ENCODE measurements at regions of chr5 and their contacts with region 1.

Region 1: DNA sequence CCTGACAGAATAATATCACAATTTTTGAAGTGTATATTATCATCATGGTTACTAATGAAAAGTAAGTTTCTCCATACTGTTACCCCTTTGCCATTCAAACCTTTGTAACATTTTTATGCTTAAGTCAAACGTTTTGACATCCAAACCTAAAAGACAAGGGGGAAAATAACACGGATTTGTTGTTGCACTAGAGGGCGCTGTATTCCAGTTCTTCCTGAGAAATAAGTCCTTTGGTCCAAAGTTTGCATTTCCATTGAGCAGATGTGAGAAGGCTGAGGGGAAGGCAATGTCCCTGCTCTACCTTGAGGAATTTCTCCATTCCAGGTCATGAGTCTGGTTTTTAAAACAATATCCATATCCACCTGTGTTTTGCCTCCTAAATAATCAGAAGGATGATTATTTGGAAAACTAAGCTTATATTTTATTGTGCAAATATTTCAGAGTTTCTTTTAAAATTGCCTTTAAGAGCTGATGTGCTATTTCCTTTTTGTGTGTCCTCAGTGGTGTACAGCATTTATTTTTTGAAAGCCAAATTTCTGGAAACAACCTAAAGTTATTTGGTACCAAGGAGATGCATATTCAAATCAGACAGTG is 9.7 kb downstream of the LECT2 start:
- DNase-seq: peak in 3 of 6 donors; percentile 25 to 48 (median 32)
- ATAC-seq: peak; percentile 43 to 82 (median 76)
- H3K4me3 ChIP-seq: no peak overlapping the region
- H3K27ac ChIP-seq: no peak overlapping the region
- H3K4me1 ChIP-seq: no peaks in the 10 kb centered on the region
- H3K27me3 ChIP-seq: no peaks in the 10 kb centered on the region
- CTCF ChIP-seq: peak in 3 of 4 donors; percentile 34 to 67 (median 65)

Region 2: DNA sequence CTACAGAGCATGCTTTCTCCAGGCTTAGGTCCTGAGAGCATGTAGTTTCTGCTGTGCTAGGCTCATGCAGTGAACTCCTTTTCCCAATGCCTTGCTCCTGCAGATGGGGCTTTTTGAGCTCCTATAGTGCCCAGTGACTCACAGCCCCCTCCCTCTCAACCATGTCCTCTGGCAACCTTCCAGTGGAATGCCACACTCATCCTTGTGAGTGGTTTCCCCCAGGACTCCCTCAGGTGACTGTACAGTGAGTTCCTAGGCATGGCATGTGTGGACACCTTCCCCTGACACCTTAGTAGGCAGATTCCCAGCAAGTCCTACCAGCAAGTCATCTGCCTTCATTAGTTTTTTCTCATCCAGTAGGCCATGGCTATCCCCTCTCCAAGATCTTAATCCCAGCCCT is 293.9 kb before region 1 on chr5:
- intact Hi-C with region 1: no loop called
- DNase-seq: no peak
- ATAC-seq: no peak
- H3K4me3 ChIP-seq: no peak overlapping the region
- H3K27ac ChIP-seq: no peak overlapping the region
- H3K4me1 ChIP-seq: no peaks in the 10 kb centered on the region
- H3K27me3 ChIP-seq: no peaks in the 10 kb centered on the region
- CTCF ChIP-seq: no peak

Region 3: DNA sequence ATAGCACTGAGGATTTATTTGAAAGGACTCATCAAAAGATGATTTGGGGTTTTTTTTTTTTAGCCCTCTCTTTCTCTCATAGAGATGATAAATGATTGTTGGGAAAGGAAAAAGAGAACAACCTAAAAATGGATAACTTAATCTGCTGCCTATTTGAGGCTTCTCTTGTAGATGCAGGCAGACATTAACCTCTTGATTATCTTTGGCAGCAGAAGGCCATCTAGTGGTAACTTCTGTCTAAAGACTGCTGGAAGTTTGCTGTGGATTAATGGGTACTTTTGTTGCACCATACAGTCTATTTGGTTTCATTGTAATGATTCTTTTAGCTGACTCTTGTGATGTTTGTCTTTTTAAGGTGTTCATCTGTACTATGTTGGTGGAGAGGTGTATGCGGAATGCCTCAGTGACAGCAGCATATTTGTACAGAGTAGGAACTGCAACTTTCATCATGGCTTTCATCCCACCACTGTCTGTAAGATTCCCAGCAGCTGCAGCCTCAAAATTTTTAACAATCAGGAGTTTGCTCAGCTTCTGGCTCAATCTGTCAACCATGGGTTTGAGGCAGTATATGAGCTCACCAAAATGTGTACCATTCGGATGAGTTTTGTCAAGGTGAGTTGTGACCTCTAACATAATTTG is 229.1 kb after region 1 on chr5:
- intact Hi-C with region 1: loop called in 1 of 3 experiments (anchors 10 kb)
- DNase-seq: no peak
- ATAC-seq: peak in 3 of 4 donors; percentile 82 to 85 (median 83)
- H3K4me3 ChIP-seq: no peak overlapping the region
- H3K27ac ChIP-seq: no peak overlapping the region
- H3K4me1 ChIP-seq: no peaks in the 10 kb centered on the region
- H3K27me3 ChIP-seq: no peaks in the 10 kb centered on the region
- CTCF ChIP-seq: peak in 3 of 4 donors; percentile 19 to 44 (median 28)